IMR-90 (cell line): ENCODE measurements at regions of chr3 and their contacts with region 1.

Region 1: GRCh38 chr3:172396400-172396799 is 51.9 kb downstream of the GHSR start:
- DNase-seq: no peak
- ATAC-seq: no peak
- H3K4me3 ChIP-seq: no peak overlapping the region
- H3K27ac ChIP-seq: no peak overlapping the region
- H3K4me1 ChIP-seq: peaks cover 4% of the 10 kb centered on the region; the same call in 1 of the 2 replicates
- H3K27me3 ChIP-seq: no peaks in the 10 kb centered on the region
- CTCF ChIP-seq: no peak
- POLR2A ChIP-seq: no peak
- RAD21 ChIP-seq: no peak

Region 2: DNA sequence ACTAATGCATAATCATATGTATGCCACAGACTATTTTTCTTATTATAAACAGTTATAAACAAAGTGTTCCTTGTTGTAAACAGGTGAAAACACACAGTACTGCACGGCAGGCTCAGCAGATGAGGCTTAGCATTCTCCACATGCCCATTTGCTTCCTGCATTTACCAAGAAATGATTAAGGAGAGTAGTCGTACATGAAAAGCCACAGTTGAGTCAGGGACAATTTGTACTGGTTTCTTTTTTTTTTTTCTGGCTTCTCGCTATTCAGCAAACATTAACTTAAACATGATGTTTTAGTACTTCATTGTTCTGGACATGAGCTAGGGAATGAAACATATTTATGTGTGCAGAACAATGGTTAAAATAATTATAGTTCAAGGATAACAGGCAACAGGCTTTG is 11.6 kb before region 1 on chr3:
- CTCF ChIA-PET with region 1: no interaction called
- POLR2A ChIA-PET with region 1: interaction called, 12 read pairs
- dilution Hi-C with region 1: no loop called
- in situ Hi-C with region 1: no loop called
- intact Hi-C with region 1: no loop called
- DNase-seq: no peak
- ATAC-seq: no peak
- H3K4me3 ChIP-seq: no peak overlapping the region
- H3K27ac ChIP-seq: no peak overlapping the region
- H3K4me1 ChIP-seq: peaks cover 2% of the 10 kb centered on the region; the same call in 1 of the 2 replicates
- H3K27me3 ChIP-seq: no peaks in the 10 kb centered on the region
- CTCF ChIP-seq: no peak
- POLR2A ChIP-seq: no peak
- RAD21 ChIP-seq: no peak

Region 3: GRCh38 chr3:172616031-172616461 is 219.6 kb after region 1 on chr3:
- CTCF ChIA-PET with region 1: no interaction called
- POLR2A ChIA-PET with region 1: no interaction called
- dilution Hi-C with region 1: no loop called
- in situ Hi-C with region 1: no loop called
- intact Hi-C with region 1: no loop called
- DNase-seq: peak; percentile 34
- ATAC-seq: peak; percentile 63
- H3K4me3 ChIP-seq: no peak overlapping the region
- H3K27ac ChIP-seq: no peak overlapping the region
- H3K4me1 ChIP-seq: no peaks in the 10 kb centered on the region; the same call in 1 of the 2 replicates
- H3K27me3 ChIP-seq: no peaks in the 10 kb centered on the region
- CTCF ChIP-seq: no peak
- POLR2A ChIP-seq: no peak
- RAD21 ChIP-seq: no peak